Activated CD8-positive, alpha-beta memory T cell treated with anti-CD3 and anti-CD28 coated beads, Interleukin-2, amount 10 ng/mL, durations not matched to agents 7 days and 5 days (primary cell): ENCODE measurements at regions of chr2 and their contacts with region 1.

Region 1: GRCh38 chr2:231399853-231400680 is 4.6 kb downstream of the B3GNT7 start:
- DNase-seq: no peak
- ATAC-seq: no peak
- H3K4me3 Mint-ChIP-seq: no peak overlapping the region
- H3K27ac Mint-ChIP-seq: no peak overlapping the region
- H3K4me1 Mint-ChIP-seq: peaks cover 11% of the 10 kb centered on the region
- H3K27me3 Mint-ChIP-seq: peaks cover 27% of the 10 kb centered on the region

Region 2: GRCh38 chr2:231297108-231297908 is 102.8 kb before region 1 on chr2:
- CTCF ChIA-PET with region 1: interaction called, 19 read pairs
- DNase-seq: peak; percentile 49
- ATAC-seq: peak; percentile 53
- H3K4me3 Mint-ChIP-seq: no peak overlapping the region
- H3K27ac Mint-ChIP-seq: no peak overlapping the region
- H3K4me1 Mint-ChIP-seq: peaks cover 4% of the 10 kb centered on the region
- H3K27me3 Mint-ChIP-seq: no peaks in the 10 kb centered on the region

Region 3: DNA sequence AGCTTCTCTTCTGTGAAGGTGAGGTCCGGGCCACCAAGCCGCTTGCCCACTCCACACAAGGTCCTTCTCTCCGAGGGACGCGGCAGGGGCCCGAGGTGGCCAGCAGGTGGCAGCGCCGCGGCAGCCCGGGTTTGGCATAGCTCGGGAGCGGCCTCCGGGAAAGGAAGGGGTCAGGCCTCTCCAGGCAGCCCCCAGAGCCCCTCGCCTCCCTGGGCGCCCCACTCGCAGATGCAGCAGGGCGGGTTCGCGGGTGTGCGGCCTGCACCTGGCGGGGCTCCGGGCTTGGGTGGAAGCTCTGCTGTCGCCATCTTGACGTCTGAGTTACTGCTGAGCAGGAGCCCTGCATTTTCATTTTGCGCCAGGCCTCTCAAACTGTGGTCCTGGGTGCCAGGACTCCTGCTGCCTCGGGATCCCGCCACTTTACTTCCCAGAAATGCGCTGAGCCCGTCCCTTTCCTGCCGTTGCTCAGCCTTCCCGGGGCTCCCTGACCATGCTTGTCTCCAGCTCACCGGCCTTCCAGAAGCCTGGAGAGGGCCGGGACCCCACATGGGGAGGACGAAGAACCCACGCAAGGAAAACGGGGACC is 82.8 kb after region 1 on chr2:
- CTCF ChIA-PET with region 1: no interaction called
- DNase-seq: peak; percentile 84
- ATAC-seq: peak; percentile 88
- H3K4me3 Mint-ChIP-seq: peak overlapping the region; percentile 74
- H3K27ac Mint-ChIP-seq: peak overlapping the region; percentile 85
- H3K4me1 Mint-ChIP-seq: peaks cover 13% of the 10 kb centered on the region
- H3K27me3 Mint-ChIP-seq: no peaks in the 10 kb centered on the region